ENCODE measurements at regions of chr15 and their contacts with region 1.

Region 1: DNA sequence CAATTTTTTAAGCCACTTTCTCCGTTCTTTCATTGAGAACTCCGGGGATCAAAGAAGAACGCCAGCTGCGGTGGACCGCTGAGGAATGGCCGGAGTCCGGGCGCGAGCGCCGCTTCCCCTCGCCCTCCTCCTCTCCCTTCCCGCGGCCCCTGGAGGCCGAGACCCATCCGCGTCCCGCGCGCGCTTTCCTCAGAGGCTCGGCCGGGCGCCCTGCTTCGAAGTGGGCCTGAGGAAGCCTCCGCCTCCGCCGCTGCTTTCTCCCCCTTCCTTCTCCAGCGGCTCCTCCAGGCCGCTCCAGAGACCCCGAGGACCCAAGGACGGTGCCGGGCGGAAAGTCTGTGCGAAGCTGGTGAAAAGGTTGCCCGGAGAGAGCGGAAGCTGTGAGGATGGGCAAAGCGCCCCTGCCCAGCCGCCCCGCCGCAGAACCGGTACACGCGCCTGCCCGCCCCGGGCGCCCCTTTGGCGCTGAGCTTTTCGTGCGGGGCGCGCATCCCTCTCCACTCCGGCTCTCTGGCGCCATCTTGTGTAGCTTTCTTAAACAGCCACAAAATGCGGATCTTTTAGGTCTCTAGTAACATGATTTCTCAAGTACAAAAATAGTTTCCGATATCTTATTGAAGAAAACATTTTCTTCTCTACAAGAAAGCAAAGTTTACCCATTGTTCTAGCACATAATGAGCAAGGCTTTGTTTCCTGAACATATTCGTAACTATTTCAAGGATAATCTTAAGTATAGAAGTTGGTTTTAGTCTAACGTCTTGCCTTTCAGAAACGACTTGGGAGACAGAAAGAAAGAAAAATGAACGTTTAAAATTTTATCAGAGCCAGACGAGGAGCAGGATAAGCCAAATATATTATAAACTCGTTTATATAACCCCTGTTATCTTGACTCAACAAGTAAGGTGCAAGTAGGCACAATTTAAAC is 59.2 kb upstream of the FAM174B start:
- DNase-seq: peak; percentile 52 to 86 (median 66)
- ATAC-seq: peak; percentile 94
- H3K4me3 ChIP-seq: peak overlapping the region; percentile 56
- H3K4me3 Mint-ChIP-seq: peak overlapping the region; percentile 90
- H3K27ac ChIP-seq: no peak overlapping the region
- H3K27ac Mint-ChIP-seq: no peak overlapping the region
- H3K4me1 ChIP-seq: peaks cover 9% of the 10 kb centered on the region
- H3K4me1 Mint-ChIP-seq: peaks cover 6% of the 10 kb centered on the region
- H3K27me3 ChIP-seq: peaks cover 9 to 10% of the 10 kb centered on the region in 2 experiments
- H3K27me3 Mint-ChIP-seq: peaks cover 41% of the 10 kb centered on the region
- CTCF ChIP-seq: peak; percentile 91

Region 2: DNA sequence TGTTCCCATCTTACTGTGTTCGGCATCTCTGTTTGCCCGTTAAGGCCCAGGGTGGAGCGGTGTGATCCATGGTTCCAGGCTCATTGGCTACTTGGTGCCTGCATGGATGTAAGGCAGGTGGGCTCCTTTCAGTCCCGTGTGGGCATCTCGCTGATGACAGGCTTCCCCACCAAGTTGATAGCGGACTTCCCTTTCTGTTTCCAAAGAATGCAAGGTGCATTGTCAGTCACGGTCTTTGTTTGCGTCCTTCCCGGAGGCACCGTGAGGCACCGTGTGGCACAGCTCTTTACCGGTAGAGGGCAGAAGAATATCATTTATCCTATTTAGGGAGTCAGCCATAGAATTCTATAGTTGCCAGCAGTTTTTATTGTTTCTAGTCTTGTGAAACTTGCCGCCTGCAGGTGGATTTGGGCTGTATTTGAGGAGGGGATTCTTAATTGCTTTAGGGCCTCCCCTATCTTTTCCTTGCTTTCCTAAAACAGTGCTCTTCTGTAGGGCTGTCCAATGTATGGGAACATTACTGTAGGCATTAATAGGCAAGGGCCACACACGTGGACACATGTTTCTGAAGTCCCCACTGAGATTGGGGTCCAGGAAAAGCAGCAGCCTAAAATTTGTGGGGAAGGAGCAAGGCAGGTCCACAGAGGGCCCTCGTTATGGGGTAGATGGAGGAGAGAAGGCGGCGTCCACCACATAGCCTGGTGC is 617.1 kb before region 1 on chr15:
- CTCF ChIA-PET with region 1: interaction called, 4 read pairs
- POLR2A ChIA-PET with region 1: no interaction called
- intact Hi-C with region 1: loop called in 1 of 2 experiments (anchors 5 kb)
- DNase-seq: peak in 12 of 14 experiments; percentile 16 to 71 (median 28)
- ATAC-seq: peak; percentile 52
- H3K4me3 ChIP-seq: no peak overlapping the region
- H3K4me3 Mint-ChIP-seq: peak overlapping the region; percentile 40
- H3K27ac ChIP-seq: no peak overlapping the region
- H3K27ac Mint-ChIP-seq: peak overlapping the region; percentile 63
- H3K4me1 ChIP-seq: peaks cover 50% of the 10 kb centered on the region
- H3K4me1 Mint-ChIP-seq: peaks cover 64% of the 10 kb centered on the region
- H3K27me3 ChIP-seq: no peaks in the 10 kb centered on the region
- H3K27me3 Mint-ChIP-seq: no peaks in the 10 kb centered on the region
- CTCF ChIP-seq: peak; percentile 51

Region 3: GRCh38 chr15:92277776-92278175 is 437.0 kb before region 1 on chr15:
- CTCF ChIA-PET with region 1: no interaction called
- POLR2A ChIA-PET with region 1: no interaction called
- intact Hi-C with region 1: loop called in 1 of 2 experiments (anchors 10 kb)
- DNase-seq: peak in 2 of 14 experiments; percentile 11 to 13
- ATAC-seq: no peak
- H3K4me3 ChIP-seq: no peak overlapping the region
- H3K4me3 Mint-ChIP-seq: no peak overlapping the region
- H3K27ac ChIP-seq: no peak overlapping the region
- H3K27ac Mint-ChIP-seq: no peak overlapping the region
- H3K4me1 ChIP-seq: no peaks in the 10 kb centered on the region
- H3K4me1 Mint-ChIP-seq: no peaks in the 10 kb centered on the region
- H3K27me3 ChIP-seq: peaks cover 0 to 3% of the 10 kb centered on the region in 2 experiments
- H3K27me3 Mint-ChIP-seq: peaks cover 26% of the 10 kb centered on the region
- CTCF ChIP-seq: no peak

Region 4: DNA sequence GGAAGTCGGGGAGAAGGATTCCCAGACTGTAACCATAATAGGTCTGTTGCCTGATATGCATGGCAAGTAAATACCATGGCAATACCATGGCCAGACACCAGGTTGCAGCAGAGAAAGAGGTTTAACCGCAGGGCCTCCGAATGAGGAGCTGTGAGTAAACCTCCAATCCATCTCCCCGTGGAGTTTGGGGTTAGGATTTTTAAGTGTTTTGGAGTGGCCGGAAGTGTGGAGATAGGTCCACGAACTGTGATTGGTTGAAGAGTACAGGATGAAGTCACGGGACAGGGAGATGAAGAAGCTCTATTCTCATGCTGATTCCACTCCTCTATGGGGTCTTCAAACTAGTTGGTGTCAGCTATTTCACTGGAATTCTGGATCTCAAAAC is 193.1 kb before region 1 on chr15:
- CTCF ChIA-PET with region 1: interaction called, 19 read pairs
- POLR2A ChIA-PET with region 1: interaction called, 3 read pairs
- intact Hi-C with region 1: loop called (anchors 1 kb)
- DNase-seq: peak; percentile 1 to 56 (median 22)
- ATAC-seq: peak; percentile 61
- H3K4me3 ChIP-seq: no peak overlapping the region
- H3K4me3 Mint-ChIP-seq: no peak overlapping the region
- H3K27ac ChIP-seq: no peak overlapping the region
- H3K27ac Mint-ChIP-seq: no peak overlapping the region
- H3K4me1 ChIP-seq: peaks cover 7% of the 10 kb centered on the region
- H3K4me1 Mint-ChIP-seq: no peaks in the 10 kb centered on the region
- H3K27me3 ChIP-seq: no peaks in the 10 kb centered on the region
- H3K27me3 Mint-ChIP-seq: no peaks in the 10 kb centered on the region
- CTCF ChIP-seq: peak; percentile 59

Region 5: GRCh38 chr15:92617549-92618520 is 96.9 kb before region 1 on chr15:
- CTCF ChIA-PET with region 1: no interaction called
- POLR2A ChIA-PET with region 1: no interaction called
- intact Hi-C with region 1: no loop called
- DNase-seq: no peak
- ATAC-seq: no peak
- H3K4me3 ChIP-seq: no peak overlapping the region
- H3K4me3 Mint-ChIP-seq: no peak overlapping the region
- H3K27ac ChIP-seq: no peak overlapping the region
- H3K27ac Mint-ChIP-seq: no peak overlapping the region
- H3K4me1 ChIP-seq: no peaks in the 10 kb centered on the region
- H3K4me1 Mint-ChIP-seq: no peaks in the 10 kb centered on the region
- H3K27me3 ChIP-seq: no peaks in the 10 kb centered on the region
- H3K27me3 Mint-ChIP-seq: no peaks in the 10 kb centered on the region
- CTCF ChIP-seq: no peak

Region 6: DNA sequence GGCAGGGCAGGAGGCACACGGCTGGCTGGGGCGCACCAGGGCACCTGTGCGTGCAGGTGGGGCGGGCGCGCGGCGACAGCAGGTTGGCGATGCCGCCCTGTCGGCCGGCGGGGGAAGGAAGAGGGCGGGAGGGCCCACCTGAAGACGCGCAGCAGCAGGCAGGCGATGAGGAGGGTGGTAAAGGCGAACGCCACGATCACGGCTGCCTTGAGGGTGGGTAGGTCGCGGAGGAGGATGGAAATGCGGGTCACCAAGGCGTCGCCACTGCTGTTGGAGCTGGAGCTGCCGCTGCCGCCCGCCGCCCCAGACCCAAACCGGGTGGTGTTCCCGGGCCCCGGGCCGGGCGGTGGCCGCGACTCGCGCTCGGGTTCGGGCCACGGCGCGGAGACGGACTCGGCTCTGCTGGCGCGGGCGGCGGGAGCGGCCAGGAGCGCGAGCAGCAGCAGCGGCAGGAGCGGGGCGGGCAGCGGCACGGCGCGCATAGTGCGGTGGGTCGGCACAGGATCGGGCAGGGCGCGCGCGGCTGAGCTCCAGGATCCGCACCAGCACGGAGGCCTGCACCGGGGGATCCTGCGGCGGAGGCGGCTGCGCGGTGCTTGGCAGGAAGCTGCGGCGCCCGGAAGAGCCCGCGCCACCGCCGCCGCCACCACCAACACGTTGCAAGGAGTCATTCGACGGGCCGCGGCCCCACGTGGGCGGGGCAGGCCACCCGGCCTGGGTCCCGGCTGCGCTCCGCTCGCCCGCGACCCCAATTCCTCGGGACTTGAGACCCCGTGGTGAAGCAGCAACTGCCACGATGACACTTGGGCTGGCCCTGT is 59.4 kb before region 1 on chr15 and contains the start of gene FAM174B:
- CTCF ChIA-PET with region 1: no interaction called
- POLR2A ChIA-PET with region 1: no interaction called
- intact Hi-C with region 1: no loop called
- DNase-seq: peak in 8 of 14 experiments; percentile 13 to 59 (median 40)
- ATAC-seq: peak; percentile 69
- H3K4me3 ChIP-seq: peak within 1 kb of the TSS; percentile 24
- H3K4me3 Mint-ChIP-seq: peak within 1 kb of the TSS; percentile 82
- H3K27ac ChIP-seq: no peak within 1 kb of the TSS
- H3K27ac Mint-ChIP-seq: no peak within 1 kb of the TSS
- H3K4me1 ChIP-seq: peaks cover 7% of the 10 kb centered on the region
- H3K4me1 Mint-ChIP-seq: peaks cover 11% of the 10 kb centered on the region
- H3K27me3 ChIP-seq: peaks cover 19 to 25% of the 10 kb centered on the region in 2 experiments
- H3K27me3 Mint-ChIP-seq: peaks cover 46% of the 10 kb centered on the region
- CTCF ChIP-seq: no peak
- total RNA-seq, gene FAM174B: 3.4 to 3.6 TPM

Region 7: DNA sequence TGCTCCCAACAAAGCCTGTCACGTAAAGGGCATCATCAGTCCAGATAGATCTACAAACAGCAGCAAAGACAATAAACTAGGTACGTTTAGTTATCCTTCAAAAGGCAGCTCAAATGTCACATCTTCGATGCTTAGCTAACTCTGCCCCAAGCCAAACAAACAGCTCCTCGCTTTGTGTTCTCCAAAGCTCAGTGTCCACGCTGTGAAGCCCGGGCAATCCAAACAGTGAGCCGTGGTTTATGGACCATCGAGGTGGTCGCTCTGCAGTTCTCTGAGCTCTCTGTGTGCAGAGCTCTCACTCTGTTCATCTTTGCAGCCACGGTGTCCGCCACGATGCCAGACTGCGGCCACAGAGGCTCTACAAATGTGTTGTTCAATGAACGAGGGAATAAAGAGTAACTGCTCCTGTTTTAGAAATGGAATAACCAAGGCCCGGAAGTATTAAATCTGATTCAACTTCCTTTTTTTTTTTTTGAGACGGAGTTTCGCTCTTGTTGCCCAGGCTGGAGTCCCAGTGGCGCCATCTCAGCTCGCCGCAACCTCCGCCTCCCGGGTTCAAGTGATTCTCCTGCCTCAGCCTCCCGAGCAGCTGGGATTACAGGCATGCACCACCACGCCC is 58.0 kb after region 1 on chr15:
- CTCF ChIA-PET with region 1: no interaction called
- POLR2A ChIA-PET with region 1: no interaction called
- intact Hi-C with region 1: no loop called
- DNase-seq: no peak
- ATAC-seq: no peak
- H3K4me3 ChIP-seq: no peak overlapping the region
- H3K4me3 Mint-ChIP-seq: no peak overlapping the region
- H3K27ac ChIP-seq: no peak overlapping the region
- H3K27ac Mint-ChIP-seq: no peak overlapping the region
- H3K4me1 ChIP-seq: no peaks in the 10 kb centered on the region
- H3K4me1 Mint-ChIP-seq: no peaks in the 10 kb centered on the region
- H3K27me3 ChIP-seq: no peaks in the 10 kb centered on the region
- H3K27me3 Mint-ChIP-seq: no peaks in the 10 kb centered on the region
- CTCF ChIP-seq: no peak

Measured in CD4-positive, alpha-beta T cell (primary cell).